ENCODE measurements at regions of chr7 and their contacts with region 1.

Region 1: GRCh38 chr7:77727936-77728701 is 31.9 kb downstream of the RSBN1L start:
- DNase-seq: no peak
- ATAC-seq: peak in 1 of 4 donors; percentile 42
- H3K4me3 ChIP-seq: no peak overlapping the region
- H3K27ac ChIP-seq: peak overlapping the region; percentile 32
- H3K4me1 ChIP-seq: peaks cover 34% of the 10 kb centered on the region
- H3K27me3 ChIP-seq: no peaks in the 10 kb centered on the region
- CTCF ChIP-seq: no peak

Region 2: DNA sequence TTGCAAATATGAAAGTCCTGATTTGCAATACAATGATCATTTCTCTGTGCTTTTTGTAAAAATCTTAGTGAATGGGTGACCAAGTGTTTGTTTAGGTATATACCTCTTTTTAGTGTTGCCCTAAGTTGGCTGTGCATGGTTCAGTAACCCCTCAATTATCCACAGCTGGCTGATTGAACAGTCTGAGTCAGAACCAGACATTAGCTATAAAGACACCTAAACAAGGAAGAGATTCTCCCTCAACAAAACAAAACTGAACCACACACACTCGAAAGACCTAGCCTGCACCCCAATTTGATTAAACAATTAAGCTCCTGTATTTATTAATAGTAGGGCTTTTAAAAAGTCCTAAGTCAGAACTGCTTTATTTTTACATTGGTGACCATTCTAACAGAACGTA is 29.1 kb before region 1 on chr7:
- intact Hi-C with region 1: loop called in 1 of 2 experiments (anchors 2 kb)
- DNase-seq: no peak
- ATAC-seq: no peak
- H3K4me3 ChIP-seq: peak overlapping the region; percentile 76
- H3K27ac ChIP-seq: peak overlapping the region; percentile 90
- H3K4me1 ChIP-seq: peaks cover 32% of the 10 kb centered on the region
- H3K27me3 ChIP-seq: no peaks in the 10 kb centered on the region
- CTCF ChIP-seq: no peak

Region 3: GRCh38 chr7:77791336-77791735 is 63.2 kb after region 1 on chr7:
- intact Hi-C with region 1: no loop called
- DNase-seq: no peak
- ATAC-seq: no peak
- H3K4me3 ChIP-seq: no peak overlapping the region
- H3K27ac ChIP-seq: no peak overlapping the region
- H3K4me1 ChIP-seq: peaks cover 20% of the 10 kb centered on the region
- H3K27me3 ChIP-seq: no peaks in the 10 kb centered on the region
- CTCF ChIP-seq: no peak